ENCODE measurements at regions of chr16 and their contacts with region 1.

Region 1: DNA sequence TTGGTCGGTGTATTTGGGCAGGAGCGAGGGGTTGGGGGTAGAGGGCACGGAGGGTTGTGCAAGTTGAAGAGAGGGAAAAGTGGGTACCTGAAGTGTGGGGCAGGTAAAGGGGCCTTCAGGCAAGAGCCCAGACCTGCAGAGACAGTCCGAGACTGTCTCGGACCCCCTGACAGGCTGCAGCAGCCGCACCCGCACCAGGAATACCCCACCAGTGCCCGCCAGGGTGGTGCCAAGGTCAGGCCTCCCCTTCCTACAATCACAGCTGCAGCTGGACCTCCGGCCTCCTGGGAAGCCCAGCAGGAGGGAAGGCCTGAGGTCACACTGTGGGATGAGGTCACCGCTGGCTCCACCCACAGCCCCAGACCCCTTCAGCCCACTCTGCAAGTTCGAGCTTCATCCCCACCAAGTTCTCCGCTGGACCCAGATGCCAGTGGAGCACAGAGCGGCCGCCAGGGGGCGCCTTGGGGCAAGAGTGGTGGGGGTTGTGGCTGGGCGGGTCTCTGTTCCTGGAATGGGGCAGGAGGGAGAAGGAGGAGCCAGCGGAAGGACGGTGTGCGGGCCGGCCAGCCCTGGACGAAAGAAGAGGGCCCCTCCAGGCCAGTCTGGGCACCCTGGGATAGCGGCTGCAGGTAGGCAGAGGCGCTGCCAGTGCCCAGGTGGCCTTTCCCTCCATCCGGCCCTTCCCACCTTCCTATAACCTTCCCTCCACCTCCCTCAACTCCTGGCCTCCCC is at the start of gene HSD3B7:
- DNase-seq: peak; percentile 80
- H3K4me3 Mint-ChIP-seq: peak within 1 kb of the TSS; percentile 72
- H3K27ac Mint-ChIP-seq: peak within 1 kb of the TSS; percentile 70
- H3K4me1 Mint-ChIP-seq: peaks cover 5% of the 10 kb centered on the region
- H3K27me3 Mint-ChIP-seq: no peaks in the 10 kb centered on the region
- CTCF ChIP-seq: peak; percentile 93
- total RNA-seq, gene HSD3B7: 5.0 and 5.3 TPM in 2 replicates

Region 2: DNA sequence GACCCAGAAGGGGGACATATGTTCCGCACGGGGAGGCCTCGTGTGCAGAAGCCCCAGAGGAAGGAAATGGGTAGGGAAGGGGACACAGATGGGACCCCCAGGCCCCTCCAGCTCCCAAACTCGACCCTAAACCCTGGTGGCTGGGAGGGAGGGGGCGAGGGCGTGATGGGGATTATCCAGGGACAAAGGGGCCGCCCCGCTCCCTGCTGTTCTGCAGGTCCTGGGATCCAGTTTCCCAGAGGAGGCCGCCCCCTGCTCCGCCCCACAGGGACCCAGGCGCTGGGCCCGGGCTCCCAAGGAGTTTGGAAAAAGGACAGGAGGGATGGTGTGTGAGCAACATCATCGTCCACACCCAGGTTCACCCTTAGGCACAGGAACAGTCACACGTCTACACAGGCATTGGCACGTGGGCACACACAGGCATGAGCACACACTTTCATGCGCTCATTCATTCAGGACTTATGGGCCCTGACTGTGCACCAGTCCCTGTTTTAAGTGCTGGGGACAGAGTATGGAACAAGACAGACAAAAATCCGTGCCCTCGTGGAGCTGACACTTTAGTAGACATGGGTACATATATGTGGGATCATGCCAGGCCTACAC is 74.3 kb before region 1 on chr16:
- CTCF ChIA-PET with region 1: no interaction called
- POLR2A ChIA-PET with region 1: no interaction called
- intact Hi-C with region 1: no loop called
- DNase-seq: no peak
- H3K4me3 Mint-ChIP-seq: no peak overlapping the region
- H3K27ac Mint-ChIP-seq: no peak overlapping the region
- H3K4me1 Mint-ChIP-seq: no peaks in the 10 kb centered on the region
- H3K27me3 Mint-ChIP-seq: no peaks in the 10 kb centered on the region
- CTCF ChIP-seq: no peak

Region 3: DNA sequence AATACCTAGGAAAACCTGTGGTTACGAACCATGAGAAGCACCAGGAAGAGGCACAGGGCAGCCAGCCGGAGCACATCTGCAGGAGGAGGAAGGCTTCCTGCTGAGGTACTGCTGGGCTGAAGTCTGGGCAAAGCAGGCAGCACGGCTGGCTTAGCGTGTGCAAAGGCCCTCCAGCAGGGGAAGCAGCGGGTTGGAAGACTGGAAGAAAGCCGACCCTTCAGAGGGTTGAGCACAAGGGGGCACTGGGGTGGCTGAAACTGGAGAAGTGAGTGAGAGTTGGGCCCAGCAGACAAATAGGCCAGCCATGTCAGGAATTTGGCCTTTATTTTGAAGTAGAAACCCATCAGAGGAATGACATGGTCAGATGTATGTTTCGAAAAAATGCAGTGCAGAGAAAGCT is 12.0 kb before region 1 on chr16:
- CTCF ChIA-PET with region 1: interaction called, 13 read pairs
- POLR2A ChIA-PET with region 1: no interaction called
- intact Hi-C with region 1: no loop called
- DNase-seq: no peak
- H3K4me3 Mint-ChIP-seq: no peak overlapping the region
- H3K27ac Mint-ChIP-seq: peak overlapping the region; percentile 57
- H3K4me1 Mint-ChIP-seq: no peaks in the 10 kb centered on the region
- H3K27me3 Mint-ChIP-seq: no peaks in the 10 kb centered on the region
- CTCF ChIP-seq: no peak

Region 4: GRCh38 chr16:31022544-31023251 is 37.9 kb after region 1 on chr16:
- CTCF ChIA-PET with region 1: interaction called, 10 read pairs
- POLR2A ChIA-PET with region 1: no interaction called
- intact Hi-C with region 1: no loop called
- DNase-seq: no peak
- H3K4me3 Mint-ChIP-seq: no peak overlapping the region
- H3K27ac Mint-ChIP-seq: no peak overlapping the region
- H3K4me1 Mint-ChIP-seq: no peaks in the 10 kb centered on the region
- H3K27me3 Mint-ChIP-seq: no peaks in the 10 kb centered on the region
- CTCF ChIP-seq: no peak

Region 5: GRCh38 chr16:31073968-31074813 is 89.4 kb after region 1 on chr16 and contains the starts of genes ZNF646 and ZNF668:
- CTCF ChIA-PET with region 1: interaction called, 15 read pairs
- POLR2A ChIA-PET with region 1: interaction called, 30 read pairs
- intact Hi-C with region 1: loop called (anchors 1 kb)
- DNase-seq: peak; percentile 98
- H3K4me3 Mint-ChIP-seq: peak within 1 kb of the TSS; percentile 97
- H3K27ac Mint-ChIP-seq: peak within 1 kb of the TSS; percentile 97
- H3K4me1 Mint-ChIP-seq: peaks cover 24% of the 10 kb centered on the region
- H3K27me3 Mint-ChIP-seq: no peaks in the 10 kb centered on the region
- CTCF ChIP-seq: no peak
- total RNA-seq, gene ZNF646: 12.6 and 15.2 TPM in 2 replicates
- total RNA-seq, gene ZNF668: 11.9 and 15.1 TPM in 2 replicates

Region 6: DNA sequence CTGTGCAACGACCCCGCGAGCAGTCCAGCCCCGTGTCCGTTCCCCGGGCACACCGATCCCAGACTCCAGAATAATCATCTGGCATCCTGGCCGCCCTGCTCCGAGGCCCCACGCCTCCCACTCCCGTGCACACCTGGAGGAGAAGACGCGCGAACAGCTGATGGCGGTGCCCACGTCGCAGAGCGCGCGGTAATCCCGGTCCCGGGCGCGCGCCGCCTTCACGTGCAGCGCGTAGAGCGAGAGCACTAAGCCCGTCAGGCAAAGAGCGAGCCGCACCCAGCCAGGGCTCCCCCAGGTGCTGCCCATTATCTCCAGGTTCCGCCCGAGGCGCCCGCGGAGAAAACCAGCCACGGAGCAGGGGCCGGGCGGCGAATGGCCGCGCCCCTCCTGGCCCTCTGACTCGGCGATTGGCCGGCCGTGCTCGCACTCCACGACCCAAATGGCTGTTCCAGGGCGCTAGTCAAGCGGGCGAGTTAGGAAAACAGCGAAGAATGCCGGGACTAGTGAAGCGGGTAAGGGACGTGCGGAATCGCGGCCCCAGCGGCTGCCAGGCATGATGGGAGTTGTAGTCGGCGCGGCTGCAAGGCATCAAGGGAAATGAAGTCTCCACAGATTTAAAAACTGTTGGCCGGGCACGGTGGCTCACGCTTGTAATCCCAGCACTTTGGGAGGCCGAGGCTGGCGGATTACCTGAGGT is 109.7 kb after region 1 on chr16 and contains the start of gene VKORC1:
- CTCF ChIA-PET with region 1: interaction called, 27 read pairs
- POLR2A ChIA-PET with region 1: interaction called, 3 read pairs
- intact Hi-C with region 1: loop called (anchors 1 kb)
- DNase-seq: peak; percentile 99
- H3K4me3 Mint-ChIP-seq: peak within 1 kb of the TSS; percentile 85
- H3K27ac Mint-ChIP-seq: peak within 1 kb of the TSS; percentile 77
- H3K4me1 Mint-ChIP-seq: peaks cover 12% of the 10 kb centered on the region
- H3K27me3 Mint-ChIP-seq: no peaks in the 10 kb centered on the region
- CTCF ChIP-seq: no peak
- total RNA-seq, gene VKORC1: 64.7 and 66.3 TPM in 2 replicates

Region 7: DNA sequence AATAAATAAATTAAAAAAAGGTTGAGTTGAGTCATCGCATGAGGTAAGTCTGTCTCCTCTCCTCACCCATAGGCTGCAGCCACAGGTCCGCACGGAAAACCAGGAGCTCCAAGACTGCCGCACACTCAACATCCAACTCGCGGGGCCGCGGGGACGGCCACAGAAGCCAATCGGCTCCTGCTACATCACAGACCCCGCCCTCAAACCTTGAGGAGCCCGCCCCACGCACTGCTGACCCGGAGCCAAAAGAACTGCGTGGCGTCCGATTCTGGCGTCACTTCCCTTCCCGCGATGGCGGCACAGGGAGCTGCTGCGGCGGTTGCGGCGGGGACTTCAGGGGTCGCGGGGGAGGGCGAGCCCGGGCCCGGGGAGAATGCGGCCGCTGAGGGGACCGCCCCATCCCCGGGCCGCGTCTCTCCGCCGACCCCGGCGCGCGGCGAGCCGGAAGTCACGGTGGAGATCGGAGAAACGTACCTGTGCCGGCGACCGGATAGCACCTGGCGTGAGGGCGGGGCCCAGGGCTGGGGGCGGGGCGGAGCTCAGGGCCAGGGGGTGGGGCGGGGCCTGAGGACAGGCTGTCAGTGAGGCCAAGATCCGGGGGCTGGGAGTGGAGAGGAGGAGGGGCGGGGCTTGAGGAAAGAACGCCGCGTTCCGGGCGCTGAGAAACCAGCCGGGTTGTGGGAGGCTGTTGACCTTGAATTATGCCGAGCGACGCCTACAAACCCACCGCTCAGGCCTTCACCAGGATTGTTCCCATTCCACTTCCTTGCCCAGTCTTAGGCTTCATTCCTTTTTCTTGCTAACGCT is 132.8 kb after region 1 on chr16 and contains the start of gene KAT8:
- CTCF ChIA-PET with region 1: interaction called, 5 read pairs
- POLR2A ChIA-PET with region 1: interaction called, 9 read pairs
- intact Hi-C with region 1: loop called (anchors 5 kb)
- DNase-seq: peak; percentile 99
- H3K4me3 Mint-ChIP-seq: peak within 1 kb of the TSS; percentile 74
- H3K27ac Mint-ChIP-seq: peak within 1 kb of the TSS; percentile 94
- H3K4me1 Mint-ChIP-seq: peaks cover 16% of the 10 kb centered on the region
- H3K27me3 Mint-ChIP-seq: no peaks in the 10 kb centered on the region
- CTCF ChIP-seq: no peak
- total RNA-seq, gene KAT8: 42.0 and 45.8 TPM in 2 replicates

Region 8: GRCh38 chr16:31440516-31441184 is 455.8 kb after region 1 on chr16:
- CTCF ChIA-PET with region 1: interaction called, 19 read pairs
- POLR2A ChIA-PET with region 1: no interaction called
- intact Hi-C with region 1: no loop called
- DNase-seq: no peak
- H3K4me3 Mint-ChIP-seq: no peak overlapping the region
- H3K27ac Mint-ChIP-seq: no peak overlapping the region
- H3K4me1 Mint-ChIP-seq: peaks cover 12% of the 10 kb centered on the region
- H3K27me3 Mint-ChIP-seq: no peaks in the 10 kb centered on the region
- CTCF ChIP-seq: no peak

Measured in MCF 10A (cell line).